Endothelial cell of umbilical vein (primary cell): ENCODE measurements at regions of chr1 and their contacts with region 1.

Region 1: DNA sequence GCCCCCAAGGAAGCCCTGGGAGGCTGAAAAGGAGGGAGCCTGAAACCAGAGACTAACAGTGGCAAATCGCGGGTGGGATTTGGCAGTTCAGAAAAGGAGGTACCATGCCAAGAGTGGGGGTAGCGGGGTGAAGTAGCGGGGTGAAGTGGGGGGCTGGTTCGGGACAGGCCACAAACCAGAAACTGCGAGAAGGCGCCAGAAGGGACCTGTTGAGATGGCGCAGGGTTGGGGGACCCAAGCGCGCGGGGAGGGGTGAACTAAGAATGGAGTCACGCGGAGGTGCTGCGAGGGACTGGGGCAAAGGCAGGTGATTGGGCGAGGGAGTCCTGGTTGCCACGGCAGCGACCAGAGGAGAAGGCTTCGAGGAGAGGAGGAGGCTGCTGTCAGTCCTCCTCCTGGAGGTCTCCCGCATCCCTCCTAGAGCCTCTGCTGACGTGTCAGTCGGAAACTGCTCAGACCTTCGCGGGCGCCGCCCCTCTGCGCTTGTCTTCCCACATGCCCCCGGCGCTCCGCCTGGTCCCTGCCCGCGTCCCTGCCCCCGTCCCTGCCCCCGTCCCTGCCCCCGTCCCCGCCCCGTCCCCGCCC is 438 bp upstream of the MIA3 start:
- DNase-seq: peak; percentile 85
- H3K4me3 ChIP-seq: peak overlapping the region; percentile 19 to 55 (median 31)
- H3K27ac ChIP-seq: peak overlapping the region; percentile 18
- H3K4me1 ChIP-seq: peaks cover 7% of the 10 kb centered on the region
- H3K27me3 ChIP-seq: peaks cover 8 to 29% of the 10 kb centered on the region in 2 experiments
- CTCF ChIP-seq: no peak
- POLR2A ChIP-seq: peak; percentile 63

Region 2: DNA sequence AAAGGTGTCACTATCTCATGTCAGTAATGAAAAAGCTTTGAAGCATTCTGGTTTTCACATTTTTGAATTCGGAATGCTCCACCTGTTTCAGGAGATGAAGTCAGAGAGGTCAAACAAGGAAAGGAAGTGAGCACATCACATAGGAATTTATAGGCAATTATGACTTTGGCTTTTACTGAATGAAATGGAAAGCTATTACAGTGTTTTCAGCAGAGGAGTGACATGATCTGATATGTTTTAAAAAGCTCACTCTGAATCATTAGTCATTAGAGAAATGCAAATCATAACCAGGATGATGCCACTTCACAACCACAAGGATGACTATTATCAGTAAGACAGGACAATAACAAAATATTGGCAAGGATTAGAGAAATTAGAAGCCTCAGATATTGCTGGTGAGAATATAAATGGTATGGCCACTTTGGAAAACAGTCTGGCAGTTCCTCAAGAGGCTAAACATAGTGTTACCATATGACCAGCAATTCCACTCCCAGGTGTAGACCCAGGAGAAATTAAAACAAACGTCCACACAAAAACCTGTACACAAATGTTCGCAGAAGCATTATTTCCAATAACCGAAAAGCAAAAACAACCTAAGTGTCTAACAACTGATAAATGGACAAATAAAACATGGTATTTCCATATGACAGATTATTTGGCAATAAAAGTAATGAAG is 35.2 kb before region 1 on chr1:
- CTCF ChIA-PET with region 1: interaction called, 3 read pairs
- POLR2A ChIA-PET with region 1: no interaction called
- dilution Hi-C with region 1: no loop called
- intact Hi-C with region 1: loop called (anchors 5 kb)
- DNase-seq: peak; percentile 58
- H3K4me3 ChIP-seq: no peak overlapping the region
- H3K27ac ChIP-seq: peak overlapping the region; percentile 38
- H3K4me1 ChIP-seq: peaks cover 14% of the 10 kb centered on the region
- H3K27me3 ChIP-seq: no peaks in the 10 kb centered on the region
- CTCF ChIP-seq: no peak
- POLR2A ChIP-seq: no peak

Region 3: DNA sequence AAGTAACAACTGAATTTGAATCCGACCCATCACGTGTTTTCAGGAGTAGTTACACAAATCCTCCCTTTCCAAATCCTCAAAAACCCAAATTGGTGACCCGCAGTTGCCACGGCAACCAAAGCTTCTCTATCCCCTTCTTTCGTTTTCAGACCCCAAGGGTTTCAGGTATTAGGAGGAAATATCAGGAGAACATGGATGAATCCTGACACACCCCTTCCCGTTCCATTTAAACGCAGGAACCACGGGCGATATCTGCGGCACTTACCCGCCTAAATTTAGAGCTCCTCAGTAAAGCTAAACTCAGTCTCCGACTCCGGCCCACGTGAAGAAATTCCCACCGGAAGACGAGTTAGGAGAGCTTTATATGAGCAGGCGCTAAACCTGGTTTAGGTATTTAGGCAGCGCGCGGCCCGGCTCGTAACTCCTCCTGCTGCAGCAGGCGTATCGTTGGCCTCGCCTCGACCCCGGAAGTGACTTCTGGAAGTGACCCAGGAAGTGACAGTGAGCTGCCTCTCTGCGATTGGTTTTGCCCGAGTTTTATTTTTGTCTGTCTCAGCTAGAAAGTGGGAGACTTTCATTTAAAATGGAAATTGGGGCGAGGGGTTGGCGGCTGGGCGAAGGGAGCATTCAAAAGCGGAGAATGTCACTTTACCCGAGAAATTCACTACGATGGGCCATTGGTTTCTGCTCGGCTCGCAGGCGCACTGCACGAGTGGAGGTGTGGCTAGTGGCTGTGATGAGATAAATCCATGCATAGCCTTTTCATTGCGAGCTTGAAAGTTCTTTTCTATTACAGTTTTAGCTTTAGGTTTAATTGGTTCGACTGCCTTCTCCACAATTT is 27.8 kb before region 1 on chr1 and contains the start of gene TAF1A:
- CTCF ChIA-PET with region 1: interaction called, 3 read pairs
- POLR2A ChIA-PET with region 1: no interaction called
- dilution Hi-C with region 1: no loop called
- intact Hi-C with region 1: loop called (anchors 1 kb)
- DNase-seq: peak; percentile 60
- H3K4me3 ChIP-seq: peak within 1 kb of the TSS; percentile 49 to 89 (median 72)
- H3K27ac ChIP-seq: peak within 1 kb of the TSS; percentile 45
- H3K4me1 ChIP-seq: peaks cover 11% of the 10 kb centered on the region
- H3K27me3 ChIP-seq: no peaks in the 10 kb centered on the region
- CTCF ChIP-seq: no peak
- POLR2A ChIP-seq: peak; percentile 37
- total RNA-seq, gene TAF1A: 5.3 and 7.1 TPM in 2 replicates